ENCODE measurements at regions of chr12 and their contacts with region 1.

Region 1: GRCh38 chr12:7995266-7995963 is 37.1 kb upstream of the FOXJ2 start:
- DNase-seq: peak; percentile 69
- ATAC-seq: peak; percentile 100
- H3K4me3 ChIP-seq: no peak overlapping the region
- H3K27ac ChIP-seq: no peak overlapping the region
- H3K4me1 ChIP-seq: peaks cover 10% of the 10 kb centered on the region
- H3K27me3 ChIP-seq: no peaks in the 10 kb centered on the region
- CTCF ChIP-seq: peak; percentile 68 to 83 (median 69)
- EP300 ChIP-seq: peak; percentile 13 to 51; a peak in 1 of 4 replicates
- POLR2A ChIP-seq: no peak
- RAD21 ChIP-seq: peak; percentile 83

Region 2: DNA sequence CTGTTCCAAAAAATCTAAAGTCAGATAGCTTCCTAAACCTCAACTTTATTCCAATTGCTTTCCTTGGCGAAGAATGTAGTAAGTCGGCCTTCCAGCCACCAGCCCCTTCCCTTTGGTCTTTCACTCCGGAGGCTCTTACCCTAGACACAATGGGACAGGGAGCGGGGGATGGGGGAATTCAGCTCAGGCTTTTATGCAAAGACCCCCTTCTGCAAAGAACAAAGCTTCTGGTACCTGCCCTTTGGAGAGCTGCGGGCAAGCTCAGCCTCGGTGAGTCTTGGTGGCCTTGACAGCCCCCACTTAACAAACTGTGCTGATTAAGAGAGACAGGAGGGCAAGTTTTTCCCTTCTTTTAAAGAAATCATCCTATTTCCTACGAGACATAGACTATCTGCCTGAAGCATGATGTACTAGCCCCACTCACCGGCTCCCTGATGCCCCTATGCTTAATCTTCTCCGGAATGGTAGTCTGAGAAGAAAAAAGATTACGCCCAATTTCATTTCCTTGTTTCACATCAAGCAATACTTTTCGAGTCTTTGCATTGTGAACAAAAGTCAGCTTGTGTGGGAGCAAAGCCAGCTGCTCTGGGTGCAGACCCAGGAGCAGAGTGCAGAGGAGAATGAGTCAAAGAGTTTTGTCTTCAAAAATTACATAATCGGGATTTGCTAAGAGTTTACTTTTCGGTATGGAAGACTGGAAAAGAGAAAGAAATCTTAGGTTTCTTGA is 207.7 kb before region 1 on chr12:
- CTCF ChIA-PET with region 1: no interaction called
- POLR2A ChIA-PET with region 1: no interaction called
- RAD21 ChIA-PET with region 1: no interaction called
- SMC1A ChIA-PET with region 1: no interaction called
- in situ Hi-C with region 1: no loop called
- intact Hi-C with region 1: no loop called
- DNase-seq: no peak
- ATAC-seq: no peak
- H3K4me3 ChIP-seq: no peak overlapping the region
- H3K27ac ChIP-seq: no peak overlapping the region
- H3K4me1 ChIP-seq: no peaks in the 10 kb centered on the region
- H3K27me3 ChIP-seq: no peaks in the 10 kb centered on the region; a peak in 1 of 4 replicates
- CTCF ChIP-seq: no peak
- EP300 ChIP-seq: no peak
- POLR2A ChIP-seq: no peak
- RAD21 ChIP-seq: no peak

Region 3: DNA sequence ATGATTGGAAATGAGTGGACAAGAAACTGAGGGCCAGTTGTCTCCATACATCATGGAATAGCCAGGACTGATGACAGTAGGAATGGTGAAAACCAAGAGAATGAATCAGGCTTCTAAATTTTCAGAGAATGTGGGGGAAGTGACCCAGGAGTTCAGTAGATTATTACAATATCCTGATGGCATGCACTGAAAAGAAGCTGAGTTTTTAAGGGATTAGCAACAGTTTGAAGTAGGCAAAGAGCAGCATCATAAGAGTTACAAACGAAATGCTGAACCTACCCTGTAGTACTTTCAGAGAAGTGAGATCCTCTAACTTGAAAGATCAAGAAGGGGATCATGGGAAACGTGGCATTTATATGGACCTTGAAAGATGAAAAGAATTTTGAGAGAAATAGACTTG is 135.9 kb before region 1 on chr12:
- CTCF ChIA-PET with region 1: interaction called, 47 read pairs
- POLR2A ChIA-PET with region 1: no interaction called
- RAD21 ChIA-PET with region 1: interaction called, 15 read pairs
- SMC1A ChIA-PET with region 1: interaction called, 11 read pairs
- in situ Hi-C with region 1: loop called (anchors 5 kb)
- intact Hi-C with region 1: loop called (anchors 2 kb)
- DNase-seq: no peak
- ATAC-seq: no peak; the same call in 1 of the 3 replicates
- H3K4me3 ChIP-seq: no peak overlapping the region
- H3K27ac ChIP-seq: no peak overlapping the region
- H3K4me1 ChIP-seq: no peaks in the 10 kb centered on the region; the same call in 1 of the 2 replicates
- H3K27me3 ChIP-seq: no peaks in the 10 kb centered on the region
- CTCF ChIP-seq: no peak
- EP300 ChIP-seq: no peak
- POLR2A ChIP-seq: no peak
- RAD21 ChIP-seq: no peak

Measured in GM12878 (cell line).